ENCODE measurements at regions of chr18 and their contacts with region 1.

Region 1: DNA sequence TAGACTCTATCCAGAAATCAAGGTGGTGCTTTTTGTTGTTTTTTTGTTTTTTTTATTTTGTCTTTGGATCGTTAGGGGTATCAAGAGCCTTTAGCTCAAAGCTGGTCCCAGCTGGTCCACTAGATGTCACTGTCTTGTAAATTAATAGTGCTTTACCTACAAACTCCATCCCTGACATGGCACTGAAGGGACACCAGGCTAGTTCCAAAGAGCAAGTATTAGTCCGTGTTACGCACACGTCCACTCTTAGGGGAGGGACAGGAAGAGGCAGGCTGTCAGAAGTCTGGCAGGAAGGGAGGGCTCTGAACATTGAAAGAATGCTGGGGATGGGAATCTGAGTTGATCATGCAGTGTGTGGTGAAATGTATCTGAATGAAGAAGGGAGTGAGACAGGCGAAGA is 85.9 kb upstream of the CCBE1 start:
- DNase-seq: no peak
- ATAC-seq: peak in 2 of 4 donors; percentile 11 to 43
- H3K4me3 ChIP-seq: no peak overlapping the region
- H3K27ac ChIP-seq: no peak overlapping the region
- H3K4me1 ChIP-seq: peaks cover 0 to 2% (median 0%) of the 10 kb centered on the region in 12 donors
- H3K27me3 ChIP-seq: peaks cover 0 to 6% (median 0%) of the 10 kb centered on the region in 9 donors
- CTCF ChIP-seq: peak in 11 of 12 donors; percentile 15 to 53 (median 29)
- POLR2A ChIP-seq: no peak

Region 2: GRCh38 chr18:59719544-59720181 is 63.5 kb before region 1 on chr18:
- intact Hi-C with region 1: loop called in 1 of 10 experiments (anchors 10 kb)
- DNase-seq: no peak
- ATAC-seq: no peak
- H3K4me3 ChIP-seq: no peak overlapping the region
- H3K27ac ChIP-seq: no peak overlapping the region
- H3K4me1 ChIP-seq: no peaks in the 10 kb centered on the region
- H3K27me3 ChIP-seq: peaks cover 0 to 4% (median 0%) of the 10 kb centered on the region in 9 donors
- CTCF ChIP-seq: no peak
- POLR2A ChIP-seq: no peak

Measured in heart left ventricle (tissue), 16 donors.